Breast epithelium (tissue), 4 donors: ENCODE measurements at regions of chr2 and their contacts with region 1.

Region 1: GRCh38 chr2:49702740-49703139 is 548.4 kb upstream of the FSHR start:
- DNase-seq: no peak
- H3K4me3 ChIP-seq: no peak overlapping the region
- H3K27ac ChIP-seq: no peak overlapping the region
- H3K4me1 ChIP-seq: no peaks in the 10 kb centered on the region
- H3K27me3 ChIP-seq: no peaks in the 10 kb centered on the region
- CTCF ChIP-seq: no peak
- POLR2A ChIP-seq: no peak

Region 2: DNA sequence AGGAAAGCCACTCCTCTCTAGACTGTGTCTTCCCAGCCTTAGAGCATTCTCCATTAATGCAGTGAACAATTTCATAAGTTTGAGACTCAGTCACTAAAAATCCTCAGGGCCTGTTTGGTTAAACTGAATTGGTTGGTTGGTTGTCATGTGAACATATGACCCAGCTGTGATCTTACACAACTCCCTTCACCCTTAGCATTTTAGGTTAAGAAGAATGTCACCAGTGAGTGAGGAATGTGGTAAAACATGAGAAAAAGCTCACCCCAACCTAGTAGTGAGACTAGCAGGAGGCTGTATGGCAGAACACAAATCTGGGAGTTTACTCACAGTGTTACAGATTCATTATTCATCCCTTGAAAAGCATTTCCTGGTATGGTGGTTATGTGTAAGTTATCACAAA is 979.6 kb before region 1 on chr2:
- intact Hi-C with region 1: loop called (anchors 5 kb)
- DNase-seq: no peak
- H3K4me3 ChIP-seq: no peak overlapping the region
- H3K27ac ChIP-seq: no peak overlapping the region
- H3K4me1 ChIP-seq: no peaks in the 10 kb centered on the region
- H3K27me3 ChIP-seq: no peaks in the 10 kb centered on the region
- CTCF ChIP-seq: no peak
- POLR2A ChIP-seq: no peak

Region 3: DNA sequence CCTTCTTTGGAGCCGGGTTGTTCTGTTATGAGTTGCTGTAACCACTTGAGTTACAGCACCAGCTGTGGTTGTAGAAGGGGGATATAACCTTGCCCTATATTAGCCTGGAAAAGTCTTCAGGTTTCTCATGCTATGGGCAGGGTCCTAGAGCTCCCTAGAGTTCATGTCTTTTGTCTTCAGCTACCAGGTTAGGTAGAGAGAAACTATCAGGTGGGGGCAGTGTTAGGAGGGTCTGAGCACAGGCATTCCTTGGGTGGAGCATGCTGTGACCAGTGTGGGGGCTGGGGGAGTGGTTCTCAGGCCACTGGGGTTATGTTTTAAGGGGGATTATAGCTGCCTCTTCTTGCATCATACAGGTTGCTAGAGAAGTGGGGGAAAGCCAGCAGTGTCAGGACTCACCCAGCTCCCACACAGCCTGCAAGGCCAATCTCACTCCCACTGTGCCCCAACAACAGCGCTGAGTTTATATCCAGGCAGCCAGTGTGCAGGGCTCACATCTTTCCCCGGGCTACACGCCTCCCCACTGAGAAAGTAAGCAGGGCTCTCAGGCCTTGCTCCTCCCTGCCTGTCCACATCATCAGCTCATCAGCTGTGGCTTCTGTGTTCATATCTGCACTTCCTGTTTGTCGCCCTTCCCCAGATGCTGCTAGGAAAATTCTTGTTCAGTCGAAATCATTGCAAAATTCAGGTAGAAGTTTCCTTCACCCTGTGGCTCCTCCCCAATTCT is 1463.0 kb after region 1 on chr2:
- intact Hi-C with region 1: no loop called
- DNase-seq: no peak
- H3K4me3 ChIP-seq: no peak overlapping the region
- H3K27ac ChIP-seq: no peak overlapping the region
- H3K4me1 ChIP-seq: no peaks in the 10 kb centered on the region
- H3K27me3 ChIP-seq: no peaks in the 10 kb centered on the region
- CTCF ChIP-seq: no peak
- POLR2A ChIP-seq: no peak